Tibial artery (tissue), 4 donors: ENCODE measurements at regions of chr10 and their contacts with region 1.

Region 1: DNA sequence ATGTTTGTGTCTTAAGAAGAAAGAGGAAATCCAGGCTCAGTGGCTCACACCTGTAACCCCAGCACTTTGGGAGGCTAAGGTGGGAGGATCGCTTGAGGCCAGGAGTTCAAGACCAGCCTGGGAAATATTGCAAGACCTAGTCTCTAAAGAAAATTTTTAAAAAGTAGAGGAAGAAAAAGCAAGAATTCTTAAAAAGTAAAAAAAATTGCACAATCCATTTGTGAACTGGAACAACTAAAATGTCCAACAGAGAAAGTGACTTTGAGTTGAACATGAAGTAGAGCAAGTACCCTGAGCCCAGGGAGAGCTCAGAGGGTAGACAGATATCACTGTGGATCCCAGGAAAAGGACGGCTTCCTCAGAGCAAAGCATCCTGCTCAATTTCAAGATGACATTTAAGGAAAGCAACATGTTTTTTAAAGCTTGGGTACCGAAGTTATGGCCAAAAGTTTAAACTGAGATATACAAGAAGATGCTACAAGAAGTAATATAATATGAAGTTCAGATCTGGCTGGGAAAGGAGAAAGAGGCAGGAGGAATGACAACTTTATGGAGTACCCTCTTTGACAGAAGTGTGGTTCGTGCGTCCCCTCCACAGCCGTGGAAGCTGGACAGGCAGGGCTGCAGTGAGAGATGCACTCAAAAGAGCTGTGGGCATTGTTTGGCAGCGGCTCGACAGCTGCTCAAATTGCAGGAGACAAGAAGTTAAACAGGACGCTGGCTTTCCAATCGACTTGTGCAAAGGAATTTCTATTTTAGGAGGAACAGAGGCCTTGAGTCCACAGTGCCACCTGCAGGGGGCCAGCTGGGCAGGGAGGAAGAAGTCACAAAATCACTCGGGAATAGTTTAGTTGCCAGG is 201.3 kb downstream of the JCAD start:
- DNase-seq: peak; percentile 70 to 90
- H3K4me3 ChIP-seq: no peak overlapping the region
- H3K27ac ChIP-seq: peak overlapping the region; percentile 64 to 66
- H3K4me1 ChIP-seq: peaks cover 0 to 51% (median 18%) of the 10 kb centered on the region in 4 donors
- H3K27me3 ChIP-seq: no peaks in the 10 kb centered on the region
- CTCF ChIP-seq: peak; percentile 74 to 81

Region 2: DNA sequence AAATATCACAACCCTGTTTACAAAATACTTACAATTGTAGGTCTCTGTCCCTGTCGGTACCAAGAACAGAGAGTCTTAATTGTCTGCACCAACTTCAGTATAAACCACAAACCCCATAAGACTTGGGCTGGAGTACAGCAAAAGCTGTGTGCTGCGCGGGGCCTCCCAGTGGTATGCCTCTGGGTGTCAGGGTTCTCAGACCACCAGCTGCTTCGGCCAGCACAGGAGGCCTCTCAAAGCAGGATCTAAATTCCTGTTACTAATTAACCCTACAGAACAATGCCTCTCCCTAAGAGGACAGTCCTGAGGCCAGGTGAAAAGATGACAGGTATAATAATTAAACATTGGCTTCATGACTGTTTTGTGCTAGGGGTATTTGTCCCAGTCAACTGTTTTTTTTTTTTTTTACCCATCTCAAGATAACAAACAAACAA is 222.3 kb before region 1 on chr10:
- intact Hi-C with region 1: loop called (anchors 10 kb)
- DNase-seq: no peak
- H3K4me3 ChIP-seq: no peak overlapping the region
- H3K27ac ChIP-seq: peak overlapping the region; percentile 86 to 87
- H3K4me1 ChIP-seq: peaks cover 0 to 48% (median 23%) of the 10 kb centered on the region in 4 donors
- H3K27me3 ChIP-seq: no peaks in the 10 kb centered on the region
- CTCF ChIP-seq: no peak

Region 3: DNA sequence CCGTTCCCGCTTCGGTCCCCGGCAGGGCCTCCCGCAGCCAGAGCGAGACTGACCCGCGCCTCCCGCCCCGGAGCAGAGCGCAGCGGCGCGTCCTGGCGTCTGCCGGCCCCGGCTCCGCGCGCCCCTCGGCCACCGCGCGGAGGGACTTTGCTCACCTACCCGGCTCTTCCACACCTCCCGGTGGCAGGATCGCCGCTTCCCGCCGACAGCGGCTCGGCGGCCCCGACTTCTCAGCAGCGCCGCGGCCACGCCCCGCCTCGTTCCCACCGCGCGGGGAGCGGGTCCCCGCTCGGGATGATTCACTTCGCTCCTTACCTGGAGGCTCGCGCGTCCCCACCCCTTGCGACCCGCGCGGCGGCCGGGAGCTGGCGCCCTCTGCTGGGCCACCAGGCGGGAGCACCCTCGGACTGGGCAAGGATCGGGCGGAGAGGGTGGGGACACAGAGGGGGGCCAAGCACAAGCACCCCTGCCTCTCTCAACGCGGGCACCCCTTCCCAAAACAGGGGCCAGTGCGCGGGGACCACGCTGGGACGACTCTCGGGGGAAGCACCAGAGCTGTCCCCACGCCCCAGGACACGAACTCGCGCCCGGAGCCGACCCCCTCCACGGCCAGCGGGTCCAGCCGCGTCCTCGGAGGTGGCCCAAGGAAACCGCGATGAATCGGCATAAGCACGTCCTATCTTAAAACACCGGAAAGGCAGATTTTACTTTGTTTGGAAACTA is 122.3 kb before region 1 on chr10:
- intact Hi-C with region 1: loop called (anchors 10 kb)
- DNase-seq: peak; percentile 84 to 95
- H3K4me3 ChIP-seq: peak overlapping the region; percentile 84 to 90
- H3K27ac ChIP-seq: peak overlapping the region; percentile 97
- H3K4me1 ChIP-seq: peaks cover 0 to 50% (median 30%) of the 10 kb centered on the region in 4 donors
- H3K27me3 ChIP-seq: no peaks in the 10 kb centered on the region
- CTCF ChIP-seq: peak; percentile 93 to 96